Activated naive CD4-positive, alpha-beta T cell treated with anti-CD3 and anti-CD28 coated beads, Interleukin-2, amount 10 ng/mL, durations not matched to agents 7 days and 5 days (primary cell): ENCODE measurements at regions of chr17 and their contacts with region 1.

Region 1: DNA sequence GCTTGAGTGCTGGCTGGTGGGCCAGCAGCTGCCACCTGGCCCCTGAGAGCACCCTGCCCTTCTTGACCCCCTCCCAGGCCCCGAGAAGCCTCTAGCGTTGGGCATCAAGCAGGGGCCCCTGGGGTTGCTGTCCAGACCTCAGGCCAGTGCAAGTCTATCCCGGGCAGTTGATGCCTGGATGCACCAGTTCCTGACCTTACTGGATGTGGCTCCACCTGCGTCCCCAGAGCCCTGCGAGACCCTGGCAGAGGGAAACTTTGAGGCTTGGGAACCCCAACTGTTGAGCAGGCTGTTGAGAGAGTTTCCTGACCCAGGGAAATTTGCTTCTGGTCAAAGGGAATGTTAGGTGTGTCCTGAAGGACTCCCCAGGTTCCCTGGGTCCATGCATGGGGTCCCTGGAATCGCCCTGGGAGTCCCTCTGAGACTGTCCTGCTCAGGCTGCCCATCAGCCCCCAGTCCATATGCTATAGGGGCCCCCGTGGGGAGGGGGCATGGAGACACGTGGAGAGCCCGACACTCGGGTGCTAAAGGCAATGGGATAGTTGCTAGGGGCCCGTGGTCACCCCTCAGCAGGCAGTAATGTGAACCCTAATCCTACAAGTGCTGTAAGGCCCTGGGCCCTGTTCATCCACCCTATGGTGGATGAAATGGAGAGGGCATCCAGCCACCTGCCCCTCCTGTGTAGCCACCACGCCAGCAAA is 46.4 kb downstream of the RAB11FIP4 start:
- DNase-seq: no peak
- H3K4me3 Mint-ChIP-seq: no peak overlapping the region
- H3K27ac Mint-ChIP-seq: no peak overlapping the region
- H3K4me1 Mint-ChIP-seq: peaks cover 17% of the 10 kb centered on the region
- H3K27me3 Mint-ChIP-seq: peaks cover 39% of the 10 kb centered on the region

Region 2: DNA sequence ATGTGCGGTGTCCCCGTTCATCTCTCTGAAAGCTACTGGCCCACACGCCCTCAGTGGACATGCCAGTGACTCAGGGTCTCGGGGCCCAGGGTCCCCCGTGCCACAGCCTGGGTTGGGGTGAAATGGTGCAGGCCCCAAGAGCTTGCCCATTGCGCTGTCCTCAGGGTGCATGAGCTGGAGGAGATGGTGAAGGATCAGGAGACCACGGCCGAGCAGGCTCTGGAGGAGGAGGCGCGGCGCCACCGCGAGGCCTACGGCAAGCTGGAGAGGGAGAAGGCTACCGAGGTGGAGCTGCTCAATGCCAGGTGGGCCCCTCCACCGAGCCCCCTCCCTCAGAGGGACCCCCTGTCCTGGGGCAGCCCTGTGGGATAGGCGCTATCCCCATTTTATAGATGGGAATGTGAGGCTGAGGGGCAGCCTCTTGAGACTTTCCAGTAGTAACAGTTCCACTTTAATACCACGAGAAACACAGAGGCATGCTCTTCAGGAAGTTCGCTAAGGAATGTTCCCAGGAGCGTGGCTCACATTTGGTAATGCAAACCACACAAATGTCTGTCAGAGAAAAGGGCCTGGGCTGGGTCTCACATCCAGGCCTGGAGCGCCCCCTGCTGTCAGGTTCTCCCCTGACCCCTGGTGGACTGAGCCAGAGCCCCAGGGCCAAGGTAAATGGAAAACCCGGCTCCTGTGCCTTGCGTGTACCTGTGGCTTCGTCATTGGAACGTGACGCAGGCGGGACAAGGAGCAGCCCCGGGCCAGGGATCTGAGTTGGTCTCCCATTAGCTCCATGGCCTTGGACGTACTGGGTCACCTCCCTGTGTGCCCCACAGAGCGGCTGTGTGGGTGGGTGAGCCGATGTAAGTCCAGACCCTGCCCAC is 87.3 kb after region 1 on chr17:
- CTCF ChIA-PET with region 1: interaction called, 47 read pairs
- DNase-seq: peak; percentile 90
- H3K4me3 Mint-ChIP-seq: no peak overlapping the region
- H3K27ac Mint-ChIP-seq: no peak overlapping the region
- H3K4me1 Mint-ChIP-seq: no peaks in the 10 kb centered on the region
- H3K27me3 Mint-ChIP-seq: no peaks in the 10 kb centered on the region

Region 3: DNA sequence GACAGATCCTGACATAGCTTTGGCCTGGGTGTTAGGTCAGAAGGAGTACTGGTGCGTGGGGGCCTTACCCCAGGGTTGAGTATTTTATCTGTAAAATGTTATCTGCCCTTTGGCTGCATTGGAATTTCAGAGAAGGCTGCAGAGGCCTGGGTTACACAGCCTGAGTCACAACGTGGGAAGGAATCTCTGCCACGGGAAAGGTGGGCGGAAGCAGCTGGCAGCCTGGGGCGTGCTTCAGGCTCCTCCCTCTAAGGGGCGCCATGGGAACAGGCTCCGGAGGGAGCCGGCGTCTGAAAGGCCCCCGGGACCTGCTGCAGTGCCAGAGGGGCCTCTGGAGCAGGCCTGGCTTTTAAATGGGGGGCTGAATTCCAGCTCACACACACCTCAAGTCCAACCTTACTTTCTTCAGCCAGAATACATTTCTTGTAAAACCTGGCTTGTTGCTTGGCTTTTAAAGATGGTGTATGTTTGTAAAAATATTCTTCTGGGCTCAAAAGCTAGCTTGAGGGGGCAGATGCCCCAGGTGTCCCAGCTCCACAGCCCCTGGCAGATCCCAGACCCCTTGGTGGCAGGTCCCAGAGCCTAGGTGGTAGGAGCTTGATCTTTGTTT is 95.8 kb after region 1 on chr17:
- CTCF ChIA-PET with region 1: interaction called, 13 read pairs
- DNase-seq: no peak
- H3K4me3 Mint-ChIP-seq: no peak overlapping the region
- H3K27ac Mint-ChIP-seq: no peak overlapping the region
- H3K4me1 Mint-ChIP-seq: peaks cover 6% of the 10 kb centered on the region
- H3K27me3 Mint-ChIP-seq: no peaks in the 10 kb centered on the region